Sigmoid colon (tissue), 7 donors: ENCODE measurements at regions of chr3 and their contacts with region 1.

Region 1: DNA sequence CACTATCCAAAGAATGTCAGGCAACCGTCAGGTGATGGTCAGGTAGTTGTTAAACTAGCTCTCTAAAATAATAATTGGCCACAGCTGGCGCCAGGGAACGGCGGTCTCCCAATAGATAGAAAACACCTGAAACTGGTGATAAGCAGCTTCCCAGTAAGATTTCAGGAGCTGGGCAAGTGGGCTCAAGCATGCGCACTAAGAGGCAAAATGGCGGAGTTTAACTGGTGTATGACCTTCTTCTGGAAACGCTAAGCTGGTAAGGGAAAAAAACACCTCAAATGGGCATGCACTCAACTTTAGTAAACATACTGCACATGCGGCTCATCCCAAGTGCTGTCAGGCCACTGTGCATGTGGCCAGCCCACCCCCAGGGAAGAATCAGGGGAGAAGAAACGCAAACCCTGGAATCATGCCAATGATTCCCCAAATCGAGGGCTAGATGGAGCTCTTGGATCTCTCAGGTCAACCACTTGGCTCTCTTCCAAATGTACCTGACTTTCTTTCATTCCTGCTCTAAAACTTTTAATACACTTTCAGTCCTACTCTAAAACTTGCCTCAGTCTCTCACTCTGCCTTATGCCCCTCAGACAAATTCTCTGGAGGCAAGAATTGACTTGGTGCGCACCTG is 195.0 kb downstream of the ZNF621 start:
- DNase-seq: no peak
- H3K4me3 ChIP-seq: no peak overlapping the region
- H3K27ac ChIP-seq: no peak overlapping the region
- H3K4me1 ChIP-seq: no peaks in the 10 kb centered on the region
- H3K27me3 ChIP-seq: no peaks in the 10 kb centered on the region
- CTCF ChIP-seq: peak in 1 of 4 experiments; percentile 27
- EP300 ChIP-seq: no peak
- POLR2A ChIP-seq: no peak

Region 2: GRCh38 chr3:40124918-40125317 is 594.9 kb before region 1 on chr3:
- intact Hi-C with region 1: no loop called
- DNase-seq: no peak
- H3K4me3 ChIP-seq: no peak overlapping the region
- H3K27ac ChIP-seq: no peak overlapping the region
- H3K4me1 ChIP-seq: no peaks in the 10 kb centered on the region
- H3K27me3 ChIP-seq: no peaks in the 10 kb centered on the region
- CTCF ChIP-seq: no peak
- EP300 ChIP-seq: no peak
- POLR2A ChIP-seq: no peak

Region 3: DNA sequence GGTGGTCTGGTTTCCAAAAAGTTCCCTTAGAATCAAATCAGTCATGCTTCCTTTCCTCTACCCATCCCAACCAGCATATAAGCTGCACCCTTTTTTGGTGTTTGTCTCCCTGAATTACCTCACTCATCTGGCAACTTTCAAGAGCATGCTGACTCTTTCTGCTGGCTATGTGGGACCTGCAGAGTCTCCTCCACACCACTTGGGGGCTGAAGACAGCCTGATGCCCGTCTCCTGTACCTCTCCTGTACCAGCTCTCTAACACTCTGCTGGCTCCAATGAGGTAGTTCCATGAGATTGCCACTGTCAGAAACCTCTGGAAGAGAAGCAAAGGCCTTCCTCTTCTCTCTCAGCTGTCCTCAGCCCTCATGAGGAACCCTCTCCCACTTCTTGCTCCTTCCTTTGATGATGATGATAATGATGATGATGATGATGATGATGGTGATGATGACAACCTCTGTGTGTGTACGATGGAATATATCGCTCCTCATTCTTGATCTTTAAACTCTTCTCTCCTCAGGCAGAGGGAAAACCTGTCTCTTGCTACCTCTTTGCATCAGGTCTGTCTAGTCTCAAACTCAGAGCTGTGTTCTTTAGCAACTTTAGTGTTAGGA is 62.4 kb after region 1 on chr3:
- intact Hi-C with region 1: no loop called
- DNase-seq: no peak
- H3K4me3 ChIP-seq: no peak overlapping the region
- H3K27ac ChIP-seq: no peak overlapping the region
- H3K4me1 ChIP-seq: peaks cover 0 to 20% (median 16%) of the 10 kb centered on the region in 4 donors
- H3K27me3 ChIP-seq: no peaks in the 10 kb centered on the region
- CTCF ChIP-seq: no peak
- EP300 ChIP-seq: no peak
- POLR2A ChIP-seq: no peak

Region 4: GRCh38 chr3:41881233-41881821 is 1161.6 kb after region 1 on chr3:
- intact Hi-C with region 1: loop called (anchors 5 kb)
- DNase-seq: no peak
- H3K4me3 ChIP-seq: no peak overlapping the region
- H3K27ac ChIP-seq: no peak overlapping the region
- H3K4me1 ChIP-seq: peaks cover 0 to 5% (median 0%) of the 10 kb centered on the region in 4 donors
- H3K27me3 ChIP-seq: no peaks in the 10 kb centered on the region
- CTCF ChIP-seq: peak in 3 of 4 experiments; percentile 37 to 51 (median 43)
- EP300 ChIP-seq: no peak
- POLR2A ChIP-seq: no peak